ENCODE measurements at regions of chr2 and their contacts with region 1.

Region 1: DNA sequence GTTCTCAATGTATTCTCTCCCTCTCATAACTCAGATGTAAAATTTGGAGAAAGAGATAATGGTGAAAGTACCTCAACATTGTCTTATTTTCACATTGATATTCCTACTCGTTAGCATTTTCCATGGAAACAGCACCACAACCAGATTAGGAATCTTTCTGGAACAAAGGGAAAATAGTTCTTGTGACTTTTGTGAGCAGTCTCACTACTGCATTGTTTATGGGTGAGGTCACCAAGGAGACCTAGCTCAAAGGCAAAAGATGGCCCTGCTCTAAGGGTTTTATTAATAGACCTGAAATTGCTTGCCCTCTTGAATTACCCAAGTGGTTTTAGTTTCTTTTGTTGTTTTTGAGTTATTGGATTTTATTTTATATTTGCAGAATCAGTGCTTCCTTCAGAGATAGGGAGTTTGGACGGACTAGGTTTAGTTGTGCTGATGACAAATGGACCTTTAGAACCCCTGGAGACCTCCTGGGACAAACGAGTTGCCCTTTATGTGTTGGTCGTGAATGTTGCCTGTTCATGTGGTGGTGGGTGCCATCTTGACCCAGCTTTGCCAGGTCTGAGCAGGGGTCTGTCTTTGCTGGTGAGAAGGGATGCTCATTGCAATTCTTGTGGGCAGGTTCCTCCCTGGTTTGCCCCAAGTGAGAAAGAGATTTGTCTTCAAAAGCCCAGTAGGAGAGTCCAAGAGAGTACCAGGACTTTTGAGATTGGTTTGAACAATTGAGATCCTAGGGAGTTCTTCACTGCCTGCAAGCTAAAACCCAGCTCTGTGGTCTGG is 58.1 kb downstream of the INPP4A start:
- DNase-seq: peak in 1 of 2 experiments; percentile 87
- H3K4me3 ChIP-seq: no peak overlapping the region
- H3K27ac ChIP-seq: peak overlapping the region; percentile 69
- H3K4me1 ChIP-seq: peaks cover 37% of the 10 kb centered on the region
- H3K27me3 ChIP-seq: no peaks in the 10 kb centered on the region
- CTCF ChIP-seq: no peak

Region 2: DNA sequence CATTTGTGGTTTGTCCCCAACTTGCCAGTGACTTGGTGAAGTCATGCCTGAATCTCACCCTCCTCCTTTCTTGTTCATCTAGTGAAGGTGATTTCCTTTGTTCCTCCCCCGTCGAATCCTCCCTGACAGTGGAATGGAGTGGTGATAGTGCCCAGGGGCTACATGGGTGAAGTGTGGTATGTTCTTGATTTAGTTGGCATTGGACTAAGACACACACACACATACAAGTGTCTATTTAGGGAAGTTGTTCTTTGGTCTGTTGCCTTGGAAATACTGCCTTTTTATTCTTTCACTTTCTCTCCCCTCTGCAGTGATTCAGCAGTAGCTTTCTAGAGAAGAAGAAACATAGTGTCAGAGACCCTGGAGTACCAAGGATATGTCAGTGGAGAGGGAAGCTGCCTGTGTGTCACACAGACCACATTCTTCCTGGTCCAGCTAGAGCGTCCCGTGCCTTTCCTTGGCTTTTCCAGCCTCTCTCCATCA is 47.2 kb before region 1 on chr2:
- CTCF ChIA-PET with region 1: no interaction called
- POLR2A ChIA-PET with region 1: no interaction called
- intact Hi-C with region 1: loop called (anchors 5 kb)
- DNase-seq: no peak
- H3K4me3 ChIP-seq: no peak overlapping the region
- H3K27ac ChIP-seq: peak overlapping the region; percentile 92; the same call in 1 of the 2 replicates
- H3K4me1 ChIP-seq: peaks cover 60% of the 10 kb centered on the region
- H3K27me3 ChIP-seq: no peaks in the 10 kb centered on the region
- CTCF ChIP-seq: no peak

Region 3: GRCh38 chr2:98568881-98569793 is 66.4 kb after region 1 on chr2:
- CTCF ChIA-PET with region 1: no interaction called
- POLR2A ChIA-PET with region 1: interaction called, 20 read pairs
- intact Hi-C with region 1: no loop called
- DNase-seq: peak in 1 of 2 experiments; percentile 43
- H3K4me3 ChIP-seq: no peak overlapping the region
- H3K27ac ChIP-seq: no peak overlapping the region
- H3K4me1 ChIP-seq: no peaks in the 10 kb centered on the region
- H3K27me3 ChIP-seq: no peaks in the 10 kb centered on the region
- CTCF ChIP-seq: peak; percentile 97

Measured in PC-9 (cell line).